Posterior cingulate gyrus (tissue), 11 donors: ENCODE measurements at regions of chr15 and their contacts with region 1.

Region 1: GRCh38 chr15:52331490-52332240 is 36.1 kb upstream of the MYO5C start:
- DNase-seq: no peak

Region 2: DNA sequence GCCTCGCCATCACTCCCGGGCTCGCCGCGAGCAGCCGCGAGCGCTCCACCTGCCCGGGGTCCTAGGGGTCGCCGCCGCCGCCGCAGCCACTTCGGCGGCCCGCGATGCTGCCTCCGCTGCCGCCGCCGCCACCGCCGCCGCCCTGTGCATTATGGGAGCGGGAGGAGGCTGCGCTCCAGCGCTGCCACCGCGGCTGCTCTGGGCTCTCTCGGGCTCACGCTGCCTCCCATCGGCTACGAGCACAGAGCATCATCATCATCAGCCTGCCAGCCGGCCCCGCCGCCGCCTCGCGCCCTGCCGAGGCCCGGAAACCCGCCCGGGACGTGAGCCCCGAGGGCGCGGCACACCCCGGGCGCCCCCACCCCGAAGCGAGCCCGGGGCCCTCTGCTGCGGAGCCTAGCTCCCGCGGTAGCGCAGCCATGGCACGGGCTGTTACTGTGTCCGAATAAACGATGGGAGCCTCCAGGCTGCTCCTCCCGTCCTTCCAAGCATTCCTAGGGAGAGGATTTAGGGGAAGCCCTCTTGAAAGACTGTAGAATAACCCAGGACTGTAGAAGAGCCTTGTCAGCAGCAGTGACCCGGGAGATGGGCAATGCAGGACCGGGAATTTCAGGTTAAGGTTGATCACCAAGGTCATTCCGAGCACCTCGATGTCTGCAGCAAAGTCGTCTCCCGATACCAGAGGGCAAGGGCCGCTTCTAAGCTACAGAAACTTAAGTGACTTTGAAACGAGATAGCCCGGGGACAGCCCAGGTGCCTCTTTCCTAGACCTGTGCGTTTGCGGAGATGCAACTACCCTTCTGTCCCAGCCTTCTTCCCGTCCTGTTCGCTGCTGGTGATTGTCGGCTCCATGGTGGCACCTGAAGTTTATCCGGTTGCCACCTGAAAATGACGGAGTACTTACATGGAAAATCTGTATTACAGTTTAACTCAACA is 197.6 kb after region 1 on chr15:
- intact Hi-C with region 1: loop called (anchors 1 kb)
- DNase-seq: peak; percentile 74 to 97 (median 77)

Region 3: GRCh38 chr15:52735231-52736089 is 403.8 kb after region 1 on chr15:
- intact Hi-C with region 1: loop called (anchors 5 kb)
- DNase-seq: peak in 5 of 10 donors; percentile 32 to 81 (median 50)